GM12878 (cell line): ENCODE measurements at regions of chr4 and their contacts with region 1.

Region 1: DNA sequence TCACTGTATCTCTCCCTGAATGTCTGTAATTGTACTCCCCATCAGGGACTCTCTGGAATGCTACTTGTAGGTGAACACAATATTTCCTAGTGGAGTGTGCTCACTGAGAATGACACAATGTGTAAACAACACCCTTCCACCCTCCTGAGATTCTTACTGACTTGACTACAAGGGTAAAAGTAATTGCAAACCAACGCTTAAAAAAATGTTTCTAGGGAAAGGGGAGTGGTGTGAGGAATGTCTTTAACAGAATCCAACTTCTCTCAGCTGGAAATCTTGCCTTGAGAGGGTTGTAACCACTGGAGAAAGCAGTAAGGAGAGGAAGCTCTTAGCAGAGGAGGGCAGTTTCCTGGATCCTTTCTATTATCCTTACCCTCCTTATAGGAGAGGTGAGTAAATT is 5.1 kb upstream of the RAPGEF2 start:
- DNase-seq: no peak
- ATAC-seq: no peak
- H3K4me3 ChIP-seq: no peak overlapping the region
- H3K27ac ChIP-seq: no peak overlapping the region
- H3K4me1 ChIP-seq: peaks cover 14% of the 10 kb centered on the region
- H3K27me3 ChIP-seq: no peaks in the 10 kb centered on the region
- CTCF ChIP-seq: no peak
- EP300 ChIP-seq: no peak
- POLR2A ChIP-seq: no peak
- RAD21 ChIP-seq: no peak

Region 2: GRCh38 chr4:158346576-158346975 is 751.2 kb before region 1 on chr4:
- CTCF ChIA-PET with region 1: no interaction called
- POLR2A ChIA-PET with region 1: no interaction called
- RAD21 ChIA-PET with region 1: no interaction called
- SMC1A ChIA-PET with region 1: no interaction called
- in situ Hi-C with region 1: no loop called
- intact Hi-C with region 1: no loop called
- DNase-seq: no peak
- ATAC-seq: no peak
- H3K4me3 ChIP-seq: no peak overlapping the region
- H3K27ac ChIP-seq: no peak overlapping the region
- H3K4me1 ChIP-seq: no peaks in the 10 kb centered on the region
- H3K27me3 ChIP-seq: no peaks in the 10 kb centered on the region
- CTCF ChIP-seq: no peak
- EP300 ChIP-seq: no peak
- POLR2A ChIP-seq: no peak
- RAD21 ChIP-seq: no peak

Region 3: GRCh38 chr4:159077702-159078495 is 19.9 kb before region 1 on chr4:
- CTCF ChIA-PET with region 1: interaction called, 7 read pairs
- POLR2A ChIA-PET with region 1: interaction called, 5 read pairs
- RAD21 ChIA-PET with region 1: no interaction called
- SMC1A ChIA-PET with region 1: interaction called, 13 read pairs
- in situ Hi-C with region 1: no loop called
- intact Hi-C with region 1: no loop called
- DNase-seq: peak; percentile 77
- ATAC-seq: peak; percentile 92
- H3K4me3 ChIP-seq: 0 out of 2 replicates have a peak overlapping the region, but pooled peaks have one; percentile 1
- H3K27ac ChIP-seq: peak overlapping the region; percentile 83
- H3K4me1 ChIP-seq: peaks cover 23% of the 10 kb centered on the region
- H3K27me3 ChIP-seq: no peaks in the 10 kb centered on the region
- CTCF ChIP-seq: no peak
- EP300 ChIP-seq: peak; percentile 92 to 95; a peak in 3 of 4 replicates
- POLR2A ChIP-seq: no peak
- RAD21 ChIP-seq: no peak